Activated B cell treated with CpG ODN at 0.5 μM for 24 hours (primary cell): ENCODE measurements at regions of chr9 and their contacts with region 1.

Region 1: GRCh38 chr9:33076358-33077004 is at the start of gene SMU1:
- DNase-seq: peak; percentile 86
- ATAC-seq: peak; percentile 98
- H3K4me3 Mint-ChIP-seq: peak within 1 kb of the TSS; percentile 98
- H3K27ac Mint-ChIP-seq: peak within 1 kb of the TSS; percentile 99
- H3K4me1 Mint-ChIP-seq: peaks cover 26% of the 10 kb centered on the region
- H3K27me3 Mint-ChIP-seq: no peaks in the 10 kb centered on the region
- CTCF ChIP-seq: no peak
- total RNA-seq, gene SMU1: 26.8 and 28.1 TPM in 2 replicates

Region 2: GRCh38 chr9:32550562-32551433 is 525.7 kb before region 1 on chr9:
- CTCF ChIA-PET with region 1: no interaction called
- POLR2A ChIA-PET with region 1: interaction called, 3 read pairs
- intact Hi-C with region 1: loop called (anchors 2 kb)
- DNase-seq: peak; percentile 91
- ATAC-seq: peak; percentile 80
- H3K4me3 Mint-ChIP-seq: peak overlapping the region; percentile 95
- H3K27ac Mint-ChIP-seq: peak overlapping the region; percentile 98
- H3K4me1 Mint-ChIP-seq: peaks cover 34% of the 10 kb centered on the region
- H3K27me3 Mint-ChIP-seq: no peaks in the 10 kb centered on the region
- CTCF ChIP-seq: no peak

Region 3: GRCh38 chr9:33107735-33108134 is 31.3 kb after region 1 on chr9:
- CTCF ChIA-PET with region 1: no interaction called
- POLR2A ChIA-PET with region 1: no interaction called
- intact Hi-C with region 1: loop called (anchors 2 kb)
- DNase-seq: no peak
- ATAC-seq: no peak
- H3K4me3 Mint-ChIP-seq: no peak overlapping the region
- H3K27ac Mint-ChIP-seq: peak overlapping the region; percentile 59
- H3K4me1 Mint-ChIP-seq: peaks cover 49% of the 10 kb centered on the region
- H3K27me3 Mint-ChIP-seq: no peaks in the 10 kb centered on the region
- CTCF ChIP-seq: no peak

Region 4: GRCh38 chr9:33202552-33203201 is 126.2 kb after region 1 on chr9:
- CTCF ChIA-PET with region 1: no interaction called
- POLR2A ChIA-PET with region 1: interaction called, 10 read pairs
- intact Hi-C with region 1: no loop called
- DNase-seq: peak; percentile 67
- ATAC-seq: peak; percentile 98
- H3K4me3 Mint-ChIP-seq: peak overlapping the region; percentile 78
- H3K27ac Mint-ChIP-seq: peak overlapping the region; percentile 83
- H3K4me1 Mint-ChIP-seq: peaks cover 24% of the 10 kb centered on the region
- H3K27me3 Mint-ChIP-seq: peaks cover 1% of the 10 kb centered on the region
- CTCF ChIP-seq: no peak

Region 5: GRCh38 chr9:33264473-33265177 is 188.1 kb after region 1 on chr9 and contains the starts of genes BAG1 and CHMP5:
- CTCF ChIA-PET with region 1: no interaction called
- POLR2A ChIA-PET with region 1: interaction called, 5 read pairs
- intact Hi-C with region 1: loop called (anchors 1 kb)
- DNase-seq: peak; percentile 99
- ATAC-seq: peak; percentile 98
- H3K4me3 Mint-ChIP-seq: peak within 1 kb of the TSS; percentile 93
- H3K27ac Mint-ChIP-seq: peak within 1 kb of the TSS; percentile 97
- H3K4me1 Mint-ChIP-seq: peaks cover 39% of the 10 kb centered on the region
- H3K27me3 Mint-ChIP-seq: no peaks in the 10 kb centered on the region
- CTCF ChIP-seq: no peak
- total RNA-seq, gene BAG1: 58.3 and 58.9 TPM in 2 replicates
- total RNA-seq, gene CHMP5: 27.4 and 28.1 TPM in 2 replicates